ENCODE measurements at regions of chr15 and their contacts with region 1.

Region 1: GRCh38 chr15:43225201-43225949 is 4.6 kb upstream of the EPB42 start:
- DNase-seq: peak; percentile 47 to 60
- H3K4me3 ChIP-seq: no peak overlapping the region
- H3K4me3 Mint-ChIP-seq: no peak overlapping the region
- H3K27ac Mint-ChIP-seq: no peak overlapping the region
- H3K4me1 ChIP-seq: no peaks in the 10 kb centered on the region
- H3K4me1 Mint-ChIP-seq: no peaks in the 10 kb centered on the region
- H3K27me3 ChIP-seq: no peaks in the 10 kb centered on the region
- H3K27me3 Mint-ChIP-seq: peaks cover 2% of the 10 kb centered on the region
- CTCF ChIP-seq: peak; percentile 52 to 77

Region 2: GRCh38 chr15:43204016-43204901 is 21.1 kb before region 1 on chr15:
- CTCF ChIA-PET with region 1: interaction called, 12 read pairs
- POLR2A ChIA-PET with region 1: no interaction called
- intact Hi-C with region 1: no loop called
- DNase-seq: peak; percentile 59 to 61
- H3K4me3 ChIP-seq: no peak overlapping the region
- H3K4me3 Mint-ChIP-seq: no peak overlapping the region
- H3K27ac Mint-ChIP-seq: no peak overlapping the region
- H3K4me1 ChIP-seq: no peaks in the 10 kb centered on the region; the same call in 1 of the 2 replicates
- H3K4me1 Mint-ChIP-seq: peaks cover 7% of the 10 kb centered on the region
- H3K27me3 ChIP-seq: peaks cover 1% of the 10 kb centered on the region; the same call in 1 of the 2 replicates
- H3K27me3 Mint-ChIP-seq: peaks cover 7% of the 10 kb centered on the region
- CTCF ChIP-seq: peak; percentile 68 to 80

Region 3: GRCh38 chr15:43260011-43260615 is 34.7 kb after region 1 on chr15:
- CTCF ChIA-PET with region 1: interaction called, 13 read pairs
- POLR2A ChIA-PET with region 1: no interaction called
- intact Hi-C with region 1: no loop called
- DNase-seq: no peak
- H3K4me3 ChIP-seq: no peak overlapping the region
- H3K4me3 Mint-ChIP-seq: no peak overlapping the region
- H3K27ac Mint-ChIP-seq: no peak overlapping the region
- H3K4me1 ChIP-seq: no peaks in the 10 kb centered on the region
- H3K4me1 Mint-ChIP-seq: no peaks in the 10 kb centered on the region
- H3K27me3 ChIP-seq: no peaks in the 10 kb centered on the region; the same call in none of the 2 replicates
- H3K27me3 Mint-ChIP-seq: peaks cover 11% of the 10 kb centered on the region
- CTCF ChIP-seq: no peak

Region 4: DNA sequence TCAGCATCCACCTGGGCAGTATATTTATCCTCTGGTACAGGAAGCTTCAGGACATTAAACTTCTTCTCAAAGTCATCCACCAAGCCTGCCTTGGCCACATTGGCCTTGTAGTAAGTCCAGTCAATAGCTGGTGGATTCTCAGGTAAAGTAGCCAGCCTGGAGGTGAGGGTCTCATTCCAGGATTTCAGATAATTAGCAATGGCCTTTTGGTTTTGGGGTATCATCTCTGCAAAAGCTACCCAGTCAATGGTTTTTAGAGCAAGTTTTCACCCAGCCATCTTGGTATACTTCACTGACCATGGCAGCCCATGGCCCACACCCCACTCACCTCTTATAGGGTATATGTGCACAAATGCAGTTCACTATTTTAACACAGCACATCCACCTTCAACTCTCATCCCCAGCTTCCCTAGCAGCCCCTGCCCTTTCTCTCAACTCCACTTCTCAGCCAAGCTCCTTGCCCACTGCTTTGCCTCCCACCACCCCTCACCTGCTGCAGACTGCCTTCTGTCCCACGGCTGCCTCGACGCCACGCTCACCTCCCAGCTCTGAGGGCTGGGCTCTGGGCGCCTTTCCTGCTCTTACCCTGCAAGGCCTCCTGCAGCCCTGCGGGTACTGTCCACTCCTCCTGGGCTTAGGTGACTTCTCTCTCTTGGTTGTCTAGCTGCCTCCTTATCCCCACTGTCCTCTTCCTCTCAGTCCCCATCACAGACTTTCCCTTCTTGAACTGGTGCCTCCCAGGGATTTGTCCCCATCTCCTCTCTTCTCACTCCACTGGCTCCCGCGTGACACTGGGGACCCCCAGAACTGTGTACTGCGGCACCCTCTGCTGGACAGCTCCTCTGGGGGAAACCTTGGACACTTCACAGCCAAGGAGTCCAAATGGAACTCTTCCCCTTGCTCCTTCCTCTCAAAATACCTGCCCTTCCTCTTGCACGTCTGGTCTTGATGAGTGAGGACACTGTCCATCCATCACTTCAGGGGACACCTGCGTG is 43.0 kb after region 1 on chr15:
- CTCF ChIA-PET with region 1: interaction called, 13 read pairs
- POLR2A ChIA-PET with region 1: no interaction called
- intact Hi-C with region 1: no loop called
- DNase-seq: peak in 1 of 2 experiments; percentile 19
- H3K4me3 ChIP-seq: no peak overlapping the region
- H3K4me3 Mint-ChIP-seq: no peak overlapping the region
- H3K27ac Mint-ChIP-seq: no peak overlapping the region
- H3K4me1 ChIP-seq: no peaks in the 10 kb centered on the region
- H3K4me1 Mint-ChIP-seq: no peaks in the 10 kb centered on the region
- H3K27me3 ChIP-seq: no peaks in the 10 kb centered on the region; the same call in 1 of the 2 replicates
- H3K27me3 Mint-ChIP-seq: peaks cover 19% of the 10 kb centered on the region
- CTCF ChIP-seq: peak in 1 of 2 experiments; percentile 35

Region 5: GRCh38 chr15:43824302-43825246 is 599.2 kb after region 1 on chr15 and contains the start of gene MFAP1:
- CTCF ChIA-PET with region 1: no interaction called
- POLR2A ChIA-PET with region 1: no interaction called
- intact Hi-C with region 1: no loop called
- DNase-seq: peak; percentile 92 to 96
- H3K4me3 ChIP-seq: peak within 1 kb of the TSS; percentile 79
- H3K4me3 Mint-ChIP-seq: peak within 1 kb of the TSS; percentile 95
- H3K27ac Mint-ChIP-seq: peak within 1 kb of the TSS; percentile 92
- H3K4me1 ChIP-seq: 0 out of 2 replicates have a peak, but pooled peaks cover 6% of the 10 kb centered on the region
- H3K4me1 Mint-ChIP-seq: peaks cover 21% of the 10 kb centered on the region
- H3K27me3 ChIP-seq: no peaks in the 10 kb centered on the region
- H3K27me3 Mint-ChIP-seq: no peaks in the 10 kb centered on the region
- CTCF ChIP-seq: no peak
- total RNA-seq, gene MFAP1: 37.1 and 37.4 TPM in 2 replicates

Measured in Caco-2 (cell line).